ENCODE measurements at regions of chr4 and their contacts with region 1.

Region 1: DNA sequence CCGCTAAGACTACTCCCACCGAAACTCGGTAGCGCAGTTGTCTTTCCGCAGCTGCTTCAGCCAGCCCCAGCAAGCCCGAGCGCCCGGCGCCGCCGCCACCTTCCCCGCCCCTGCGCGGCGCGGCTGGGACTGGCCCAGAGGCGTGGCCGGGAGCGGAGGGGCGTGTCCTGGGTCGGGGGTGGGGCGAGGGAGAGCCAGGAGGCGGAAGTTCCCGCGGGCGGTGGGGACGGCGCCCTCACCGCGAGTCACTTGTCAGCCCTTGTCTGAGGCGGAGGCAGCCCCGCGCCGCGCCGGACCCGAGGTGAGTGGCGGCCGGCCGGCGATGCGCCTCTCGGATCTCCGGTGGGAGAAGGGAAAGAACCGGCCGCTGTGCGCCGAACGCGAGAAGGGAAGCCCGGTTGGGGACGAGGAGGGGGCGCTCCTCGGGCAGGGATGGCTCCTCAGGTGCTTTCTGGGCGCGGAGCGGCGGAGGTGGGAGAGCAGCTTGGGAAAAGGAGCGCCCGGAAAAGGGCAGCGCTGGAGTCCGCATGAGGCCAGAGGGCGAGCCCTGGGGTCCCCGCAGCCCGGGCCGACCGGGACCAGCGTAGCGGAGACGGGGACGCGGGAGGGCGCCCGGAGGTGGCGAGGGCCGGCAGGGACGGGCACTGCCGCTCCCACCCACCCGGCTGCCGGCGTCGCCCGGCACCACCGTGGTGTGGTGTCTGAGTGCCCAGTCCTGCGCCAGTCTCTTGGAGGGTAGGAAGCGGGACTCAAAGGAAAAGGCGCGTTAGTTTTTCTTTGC is at the start of gene PDLIM5:
- DNase-seq: peak; percentile 80 to 93 (median 88)
- ATAC-seq: peak; percentile 98
- H3K4me3 ChIP-seq: peak within 1 kb of the TSS; percentile 78
- H3K4me3 Mint-ChIP-seq: peak within 1 kb of the TSS; percentile 87 to 95 (median 92)
- H3K27ac ChIP-seq: peak within 1 kb of the TSS; percentile 63
- H3K27ac Mint-ChIP-seq: peak within 1 kb of the TSS; percentile 58 to 86 (median 77)
- H3K4me1 ChIP-seq: peaks cover 5 to 17% of the 10 kb centered on the region in 2 donors
- H3K4me1 Mint-ChIP-seq: peaks cover 16 to 33% (median 29%) of the 10 kb centered on the region in 7 donors
- H3K27me3 ChIP-seq: peaks cover 0 to 3% of the 10 kb centered on the region in 2 donors
- H3K27me3 Mint-ChIP-seq: peaks cover 10 to 43% (median 21%) of the 10 kb centered on the region in 5 donors
- total RNA-seq, gene PDLIM5: 14.4 to 61.7 (median 31.4) TPM

Region 2: DNA sequence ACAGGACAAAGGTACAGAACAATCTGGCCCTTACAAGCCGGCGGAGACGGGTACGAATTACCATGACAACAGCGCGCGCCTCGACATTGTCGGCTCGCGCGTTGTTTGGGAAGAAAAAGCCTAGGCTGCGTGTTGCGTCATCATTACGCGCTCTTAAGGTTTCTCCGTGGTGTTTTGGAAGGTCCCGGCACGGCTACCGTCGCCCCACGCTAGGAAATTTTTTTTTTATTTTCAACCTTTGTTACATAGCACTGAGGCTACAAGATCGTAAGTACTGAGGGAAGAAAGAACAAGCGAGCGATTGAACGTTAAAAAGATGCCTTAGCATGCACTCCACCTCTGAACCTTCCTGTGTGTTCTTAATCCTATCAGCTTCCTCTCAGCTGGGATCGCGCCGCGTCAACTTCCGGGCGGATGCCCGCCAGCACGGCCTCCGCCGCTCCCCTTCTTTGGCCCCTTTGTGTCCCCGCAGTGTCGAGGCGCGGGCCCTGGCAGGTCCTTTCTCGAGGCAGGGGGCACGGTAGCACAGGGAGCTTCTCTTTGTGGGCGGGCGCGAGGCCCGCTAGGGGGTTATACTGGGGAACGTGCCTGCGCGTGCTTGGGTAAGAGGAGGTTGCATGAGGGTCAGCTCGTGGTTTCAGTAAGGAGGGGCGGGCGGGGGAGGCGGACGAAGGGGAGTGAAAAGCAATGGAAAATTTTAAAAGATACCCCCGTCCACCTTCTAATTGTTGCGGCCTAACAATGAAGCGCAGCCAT is 244.2 kb before region 1 on chr4 and contains the start of gene SMARCAD1:
- CTCF ChIA-PET with region 1: interaction called, 4 read pairs
- POLR2A ChIA-PET with region 1: no interaction called
- intact Hi-C with region 1: loop called (anchors 1 kb)
- DNase-seq: peak; percentile 69 to 93 (median 89)
- ATAC-seq: peak; percentile 93
- H3K4me3 ChIP-seq: peak within 1 kb of the TSS; percentile 100
- H3K4me3 Mint-ChIP-seq: peak within 1 kb of the TSS; percentile 91 to 100 (median 98)
- H3K27ac ChIP-seq: peak within 1 kb of the TSS; percentile 86
- H3K27ac Mint-ChIP-seq: peak within 1 kb of the TSS; percentile 98 to 100 (median 99)
- H3K4me1 ChIP-seq: peaks cover 14 to 17% of the 10 kb centered on the region in 2 donors
- H3K4me1 Mint-ChIP-seq: peaks cover 25 to 53% (median 43%) of the 10 kb centered on the region in 7 donors
- H3K27me3 ChIP-seq: no peaks in the 10 kb centered on the region
- H3K27me3 Mint-ChIP-seq: peaks cover 4 to 11% (median 6%) of the 10 kb centered on the region in 5 donors
- total RNA-seq, gene SMARCAD1: 15.9 to 34.2 (median 30.4) TPM

Region 3: GRCh38 chr4:94577136-94577535 is 125.3 kb after region 1 on chr4:
- CTCF ChIA-PET with region 1: no interaction called
- POLR2A ChIA-PET with region 1: no interaction called
- intact Hi-C with region 1: no loop called
- DNase-seq: no peak
- ATAC-seq: no peak
- H3K4me3 ChIP-seq: no peak overlapping the region
- H3K4me3 Mint-ChIP-seq: no peak overlapping the region
- H3K27ac ChIP-seq: no peak overlapping the region
- H3K27ac Mint-ChIP-seq: no peak overlapping the region
- H3K4me1 ChIP-seq: no peaks in the 10 kb centered on the region
- H3K4me1 Mint-ChIP-seq: no peaks in the 10 kb centered on the region
- H3K27me3 ChIP-seq: no peaks in the 10 kb centered on the region
- H3K27me3 Mint-ChIP-seq: no peaks in the 10 kb centered on the region

Region 4: GRCh38 chr4:95087657-95088455 is 636.0 kb after region 1 on chr4:
- CTCF ChIA-PET with region 1: no interaction called
- POLR2A ChIA-PET with region 1: no interaction called
- intact Hi-C with region 1: loop called in 1 of 2 experiments (anchors 5 kb)
- DNase-seq: no peak
- ATAC-seq: no peak
- H3K4me3 ChIP-seq: no peak overlapping the region
- H3K4me3 Mint-ChIP-seq: no peak overlapping the region
- H3K27ac ChIP-seq: no peak overlapping the region
- H3K27ac Mint-ChIP-seq: no peak overlapping the region
- H3K4me1 ChIP-seq: no peaks in the 10 kb centered on the region
- H3K4me1 Mint-ChIP-seq: peaks cover 7 to 46% (median 16%) of the 10 kb centered on the region in 7 donors
- H3K27me3 ChIP-seq: no peaks in the 10 kb centered on the region
- H3K27me3 Mint-ChIP-seq: peaks cover 0 to 11% (median 0%) of the 10 kb centered on the region in 5 donors